Calu3 (cell line): ENCODE measurements at regions of chr3 and their contacts with region 1.

Region 1: DNA sequence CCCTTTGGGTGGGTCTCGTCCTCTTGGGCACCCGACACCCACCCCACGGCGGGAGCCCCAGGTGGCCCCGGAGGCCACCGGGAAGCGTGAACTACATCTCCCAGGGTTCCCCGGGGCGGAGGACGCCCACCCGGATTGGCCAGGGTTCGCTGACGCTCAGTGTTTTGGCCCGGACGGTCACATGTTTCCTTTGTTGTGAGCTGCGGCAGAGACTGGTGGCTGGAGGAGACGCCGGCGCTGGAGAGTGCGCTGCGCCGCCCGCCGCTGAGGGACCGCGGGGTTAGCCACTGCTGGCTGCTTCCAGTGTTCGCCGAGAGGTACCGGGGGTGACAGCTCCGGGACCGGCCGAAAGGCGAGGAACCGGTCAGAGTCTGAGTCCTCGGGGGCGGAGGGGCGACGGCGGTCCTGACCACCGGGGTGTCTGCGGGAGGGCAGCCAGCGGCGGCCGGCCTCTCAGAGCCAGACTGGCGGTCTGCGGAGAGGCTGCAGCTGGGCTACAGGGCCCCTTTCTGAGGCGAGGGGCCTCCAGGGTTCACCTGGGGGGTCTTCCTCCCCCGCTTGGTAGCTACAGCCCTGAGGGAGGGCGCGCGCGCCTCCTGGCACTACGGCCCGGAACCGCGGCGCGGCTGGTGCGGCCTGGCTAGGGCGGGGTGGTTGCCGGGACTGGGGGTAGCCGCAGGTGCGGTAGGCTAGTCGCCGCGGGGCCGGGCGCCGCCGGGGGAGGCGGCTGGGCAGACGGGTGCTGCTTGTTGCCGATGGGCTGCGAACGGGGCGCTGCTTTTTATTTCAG is at the start of gene KLHL24:
- DNase-seq: peak; percentile 98
- H3K4me3 Mint-ChIP-seq: peak within 1 kb of the TSS; percentile 99
- H3K27ac Mint-ChIP-seq: peak within 1 kb of the TSS; percentile 85
- H3K4me1 Mint-ChIP-seq: peaks cover 21% of the 10 kb centered on the region
- H3K27me3 Mint-ChIP-seq: peaks cover 1% of the 10 kb centered on the region
- CTCF ChIP-seq: peak; percentile 32
- total RNA-seq, gene KLHL24: 38.2 and 42.7 TPM in 2 replicates

Region 2: DNA sequence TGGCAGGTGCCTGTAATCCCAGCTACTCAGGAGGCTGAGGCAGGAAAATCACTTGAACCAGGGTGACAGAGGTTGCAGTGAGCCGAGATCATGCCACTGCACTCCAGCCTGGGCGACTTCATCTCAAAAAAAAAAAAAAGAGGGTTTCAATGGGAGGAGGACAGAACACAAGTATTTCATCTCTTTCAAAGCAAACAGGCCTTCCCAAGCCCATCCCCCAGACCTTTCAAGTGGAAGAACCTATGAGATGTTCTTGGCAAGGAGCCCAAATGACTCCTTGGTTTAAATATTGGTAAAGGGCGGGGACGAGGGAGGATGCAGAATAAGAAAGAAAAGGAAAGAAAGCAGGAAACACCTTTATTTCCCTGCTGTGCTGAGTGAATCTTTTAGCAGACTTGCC is 145.0 kb before region 1 on chr3:
- CTCF ChIA-PET with region 1: no interaction called
- intact Hi-C with region 1: loop called (anchors 10 kb)
- DNase-seq: peak; percentile 65
- H3K4me3 Mint-ChIP-seq: peak overlapping the region; percentile 8
- H3K27ac Mint-ChIP-seq: no peak overlapping the region
- H3K4me1 Mint-ChIP-seq: peaks cover 24% of the 10 kb centered on the region
- H3K27me3 Mint-ChIP-seq: peaks cover 23% of the 10 kb centered on the region
- CTCF ChIP-seq: no peak

Region 3: GRCh38 chr3:183697610-183698317 is 62.1 kb after region 1 on chr3 and contains the start of gene YEATS2:
- CTCF ChIA-PET with region 1: interaction called, 4 read pairs
- intact Hi-C with region 1: loop called (anchors 2 kb)
- DNase-seq: peak; percentile 81
- H3K4me3 Mint-ChIP-seq: peak within 1 kb of the TSS; percentile 68
- H3K27ac Mint-ChIP-seq: peak within 1 kb of the TSS; percentile 6
- H3K4me1 Mint-ChIP-seq: peaks cover 24% of the 10 kb centered on the region
- H3K27me3 Mint-ChIP-seq: no peaks in the 10 kb centered on the region
- CTCF ChIP-seq: no peak
- total RNA-seq, gene YEATS2: 54.6 and 57.4 TPM in 2 replicates